ENCODE measurements at regions of chr14 and their contacts with region 1.

Region 1: GRCh38 chr14:93906341-93907329 is 20.5 kb upstream of the FAM181A start:
- DNase-seq: peak; percentile 83
- ATAC-seq: peak; percentile 88
- H3K4me3 Mint-ChIP-seq: no peak overlapping the region
- H3K27ac Mint-ChIP-seq: no peak overlapping the region
- H3K4me1 Mint-ChIP-seq: no peaks in the 10 kb centered on the region
- H3K27me3 Mint-ChIP-seq: peaks cover 13% of the 10 kb centered on the region

Region 2: DNA sequence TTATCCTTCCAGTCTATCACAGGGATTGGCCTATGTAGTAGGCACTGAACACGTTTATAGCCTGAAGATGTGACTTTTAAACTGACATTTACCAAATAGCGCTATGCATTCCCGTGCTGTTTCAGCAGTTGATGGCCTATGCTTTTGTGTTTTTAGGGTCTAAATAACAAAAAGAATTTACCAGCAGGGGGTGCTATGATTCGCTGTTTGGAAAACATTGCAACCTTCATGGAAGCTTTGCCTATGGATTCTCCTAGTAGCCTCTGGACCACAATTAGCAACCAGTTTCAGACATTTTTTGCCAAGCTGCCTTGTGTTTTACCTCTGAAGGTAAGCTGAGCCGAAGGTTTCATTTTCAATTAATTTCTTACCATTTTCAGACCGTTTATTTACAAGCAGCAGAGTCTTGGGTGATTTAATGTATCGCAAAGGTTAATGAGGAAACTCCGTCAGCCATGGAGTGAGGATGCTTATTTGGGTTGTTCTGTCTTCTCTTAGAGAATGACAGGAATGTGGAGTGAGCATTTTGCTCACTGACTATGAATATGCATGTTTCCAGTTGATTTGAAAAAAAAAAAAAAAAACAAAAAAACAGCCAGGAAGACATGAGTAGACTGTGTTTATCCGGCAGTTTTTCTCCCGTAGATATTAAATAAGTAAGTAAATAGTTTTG is 251.4 kb before region 1 on chr14:
- CTCF ChIA-PET with region 1: interaction called, 25 read pairs
- DNase-seq: no peak
- ATAC-seq: no peak
- H3K4me3 Mint-ChIP-seq: no peak overlapping the region
- H3K27ac Mint-ChIP-seq: no peak overlapping the region
- H3K4me1 Mint-ChIP-seq: no peaks in the 10 kb centered on the region
- H3K27me3 Mint-ChIP-seq: peaks cover 16% of the 10 kb centered on the region

Measured in activated CD8-positive, alpha-beta memory T cell treated with anti-CD3 and anti-CD28 coated beads, Interleukin-2, amount 10 ng/mL, durations not matched to agents 7 days and 5 days (primary cell).